ENCODE measurements at regions of chr15 and their contacts with region 1.

Region 1: DNA sequence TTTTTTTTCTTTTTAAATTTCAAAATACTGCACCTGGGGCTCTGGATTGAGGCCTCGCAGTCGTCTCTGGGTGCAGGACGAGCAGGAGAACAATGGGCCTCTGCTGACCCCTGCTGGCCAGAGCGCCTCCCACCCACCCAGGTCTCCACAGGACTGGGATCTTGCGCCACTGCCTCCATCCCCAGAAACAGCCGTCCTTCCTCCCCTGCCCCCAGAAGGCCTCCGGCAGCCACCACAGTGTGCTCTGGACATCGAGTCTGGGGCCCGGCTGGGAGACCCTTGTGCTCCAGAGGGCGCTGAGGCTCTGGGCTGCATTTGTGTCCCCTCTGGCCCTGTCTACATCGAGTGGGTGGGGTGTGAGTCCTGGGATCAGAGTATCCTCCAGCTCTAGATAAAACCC is 6.6 kb upstream of the ACSBG1 start:
- DNase-seq: peak; percentile 66 to 80
- ATAC-seq: peak; percentile 84 to 93
- H3K4me3 ChIP-seq: no peak overlapping the region
- H3K27ac ChIP-seq: no peak overlapping the region
- H3K4me1 ChIP-seq: peaks cover 0 to 7% of the 10 kb centered on the region in 2 donors
- H3K27me3 ChIP-seq: no peaks in the 10 kb centered on the region
- CTCF ChIP-seq: peak; percentile 84 to 94 (median 91)
- POLR2A ChIP-seq: no peak

Region 2: GRCh38 chr15:77959432-77959879 is 281.6 kb before region 1 on chr15:
- in situ Hi-C with region 1: loop called (anchors 5 to 25 kb)
- intact Hi-C with region 1: no loop called
- DNase-seq: peak; percentile 49 to 71
- ATAC-seq: peak; percentile 89 to 98
- H3K4me3 ChIP-seq: peak overlapping the region; percentile 21 to 50 (median 30)
- H3K27ac ChIP-seq: no peak overlapping the region
- H3K4me1 ChIP-seq: peaks cover 0 to 9% of the 10 kb centered on the region in 2 donors
- H3K27me3 ChIP-seq: no peaks in the 10 kb centered on the region
- CTCF ChIP-seq: peak; percentile 91 to 99 (median 95)
- POLR2A ChIP-seq: no peak

Region 3: DNA sequence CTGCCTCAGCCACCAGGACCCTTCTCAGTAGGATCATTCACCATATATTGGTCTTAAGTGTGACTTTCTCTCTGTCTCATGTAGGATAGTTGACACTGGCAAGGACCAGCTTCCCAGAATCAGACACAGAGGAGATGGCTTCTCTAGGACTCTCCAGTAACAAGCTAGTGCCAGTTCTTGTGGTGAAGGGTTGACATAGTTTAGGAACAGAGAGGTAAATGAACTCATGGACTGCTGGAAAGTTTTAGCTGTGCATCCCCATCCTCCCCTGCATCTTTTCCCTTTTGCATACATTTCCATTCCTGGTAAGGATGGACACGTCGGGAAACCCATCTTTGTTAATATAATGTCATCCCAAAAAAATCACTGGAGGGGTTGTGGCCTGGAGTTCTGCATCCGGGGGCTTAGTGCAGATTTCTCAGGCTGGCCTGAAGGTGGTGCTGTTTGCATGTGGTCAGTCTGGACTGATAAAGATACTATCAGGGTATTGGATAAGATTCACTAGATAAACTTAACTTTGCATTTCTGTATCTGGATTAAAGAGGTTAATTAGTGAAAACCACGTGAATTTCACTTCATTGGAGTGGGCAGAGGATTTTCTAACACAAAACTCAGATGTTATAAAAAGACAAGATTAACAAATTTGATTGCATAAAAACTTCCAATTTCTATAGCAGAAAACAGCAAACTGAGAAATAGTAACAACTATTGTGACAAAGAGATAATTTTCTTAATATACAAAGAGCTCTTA is 274.3 kb before region 1 on chr15:
- in situ Hi-C with region 1: loop called in 3 of 4 experiments (anchors 25 kb)
- intact Hi-C with region 1: loop called (anchors 5 kb)
- DNase-seq: no peak
- ATAC-seq: peak; percentile 80 to 88
- H3K4me3 ChIP-seq: no peak overlapping the region
- H3K27ac ChIP-seq: no peak overlapping the region
- H3K4me1 ChIP-seq: peaks cover 0 to 6% of the 10 kb centered on the region in 2 donors
- H3K27me3 ChIP-seq: no peaks in the 10 kb centered on the region
- CTCF ChIP-seq: peak; percentile 72 to 90 (median 80)
- POLR2A ChIP-seq: no peak

Region 4: DNA sequence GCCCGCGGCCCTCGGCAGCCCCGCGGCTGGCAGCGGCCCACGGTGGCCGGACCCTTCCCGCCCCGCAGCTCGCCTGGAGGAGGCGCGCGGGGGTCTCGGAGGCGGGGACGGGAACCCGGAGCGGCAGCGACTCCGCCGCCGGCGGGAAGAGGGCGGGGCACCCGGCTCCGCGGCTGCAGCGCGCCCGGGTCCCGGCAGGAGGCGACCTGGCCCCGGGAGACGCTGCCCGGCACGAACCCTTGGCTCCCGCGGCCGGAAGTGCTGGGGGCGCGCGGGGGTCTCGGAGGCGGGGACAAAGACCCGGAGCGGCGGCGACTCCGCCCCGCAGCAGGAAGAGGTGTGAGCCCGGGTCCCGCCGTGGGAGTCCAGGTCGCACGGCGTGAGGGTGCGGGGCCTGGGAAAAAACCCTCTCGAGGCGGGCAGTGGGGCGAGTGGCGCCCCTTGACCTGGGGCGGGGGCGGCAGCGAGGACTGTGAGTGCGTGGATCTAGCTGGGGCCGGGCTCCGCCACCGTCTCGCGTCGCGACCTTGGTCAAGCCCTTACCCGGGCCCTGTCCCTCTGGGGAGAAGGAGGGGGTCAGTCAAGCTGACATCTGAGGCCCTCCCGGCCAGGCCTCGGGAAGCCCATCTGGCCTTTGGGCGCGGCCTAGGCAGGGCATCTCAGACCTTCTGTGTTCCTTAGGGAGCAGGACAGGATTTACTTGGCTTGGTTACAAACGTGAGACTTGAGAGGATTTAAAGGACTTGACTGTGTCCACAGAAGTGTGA is 109.5 kb before region 1 on chr15 and contains the start of gene CIB2:
- in situ Hi-C with region 1: no loop called
- intact Hi-C with region 1: loop called (anchors 1 kb)
- DNase-seq: peak; percentile 35 to 54
- ATAC-seq: peak; percentile 71 to 72
- H3K4me3 ChIP-seq: peak within 1 kb of the TSS; percentile 65 to 98 (median 70)
- H3K27ac ChIP-seq: peak within 1 kb of the TSS; percentile 69 to 83 (median 75)
- H3K4me1 ChIP-seq: peaks cover 21 to 22% of the 10 kb centered on the region in 2 donors
- H3K27me3 ChIP-seq: no peaks in the 10 kb centered on the region
- CTCF ChIP-seq: peak; percentile 60 to 95 (median 93)
- POLR2A ChIP-seq: no peak
- total RNA-seq, gene CIB2: 5.6 to 14.4 (median 6.7) TPM

Region 5: GRCh38 chr15:78177447-78177873 is 63.5 kb before region 1 on chr15:
- in situ Hi-C with region 1: loop called in 3 of 4 experiments (anchors 5 to 10 kb)
- intact Hi-C with region 1: loop called (anchors 1 kb)
- DNase-seq: peak in 1 of 2 donors; percentile 33
- ATAC-seq: no peak
- H3K4me3 ChIP-seq: no peak overlapping the region
- H3K27ac ChIP-seq: no peak overlapping the region
- H3K4me1 ChIP-seq: peaks cover 0 to 2% of the 10 kb centered on the region in 2 donors
- H3K27me3 ChIP-seq: no peaks in the 10 kb centered on the region
- CTCF ChIP-seq: peak; percentile 59 to 80 (median 64)
- POLR2A ChIP-seq: no peak